ENCODE measurements at regions of chr21 and their contacts with region 1.

Region 1: DNA sequence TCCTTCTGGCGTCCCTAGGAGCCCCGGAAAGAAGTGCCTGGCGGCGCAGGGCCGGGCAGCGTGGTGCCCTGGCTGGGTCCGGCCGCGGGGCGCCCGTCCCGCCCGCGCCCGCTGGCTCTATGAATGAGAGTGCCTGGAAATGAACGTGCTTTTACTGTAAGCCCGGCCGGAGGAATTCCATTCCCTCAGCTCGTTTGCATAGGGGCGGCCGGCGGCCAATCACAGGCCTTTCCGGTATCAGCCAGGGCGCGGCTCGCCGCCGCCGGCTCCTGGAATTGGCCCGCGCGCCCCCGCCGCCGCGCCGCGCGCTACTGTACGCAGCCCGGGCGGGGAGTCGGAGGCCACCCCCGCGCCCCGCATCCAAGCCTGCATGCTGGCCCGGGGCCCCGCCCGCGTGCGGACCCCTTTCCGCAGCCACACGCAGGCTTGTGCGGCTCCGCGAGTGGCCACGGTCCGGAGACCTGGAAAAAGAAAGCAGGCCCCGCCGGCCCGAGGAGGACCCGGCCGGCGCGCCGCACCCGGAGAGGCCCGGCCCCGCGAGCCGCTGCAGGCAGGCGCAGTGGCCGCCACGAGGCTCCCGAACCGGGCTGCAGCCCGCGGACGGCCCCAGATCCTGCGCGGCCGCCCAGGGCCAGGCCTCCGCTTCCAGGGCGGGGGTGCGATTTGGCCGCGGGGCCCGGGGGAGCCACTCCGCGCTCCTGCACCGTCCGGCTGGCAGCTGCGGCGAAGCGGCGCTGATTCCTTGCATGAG is 160.4 kb downstream of the RUNX1 start:
- DNase-seq: peak; percentile 82
- ATAC-seq: peak; percentile 45
- H3K4me3 Mint-ChIP-seq: peak overlapping the region; percentile 91
- H3K27ac Mint-ChIP-seq: peak overlapping the region; percentile 99
- H3K4me1 Mint-ChIP-seq: peaks cover 53% of the 10 kb centered on the region
- H3K27me3 Mint-ChIP-seq: peaks cover 1% of the 10 kb centered on the region
- CTCF ChIP-seq: no peak

Region 2: GRCh38 chr21:34845521-34846451 is 43.0 kb before region 1 on chr21:
- CTCF ChIA-PET with region 1: interaction called, 4 read pairs
- POLR2A ChIA-PET with region 1: interaction called, 24 read pairs
- intact Hi-C with region 1: loop called (anchors 2 kb)
- DNase-seq: no peak
- ATAC-seq: peak; percentile 74
- H3K4me3 Mint-ChIP-seq: peak overlapping the region; percentile 52
- H3K27ac Mint-ChIP-seq: peak overlapping the region; percentile 64
- H3K4me1 Mint-ChIP-seq: peaks cover 36% of the 10 kb centered on the region
- H3K27me3 Mint-ChIP-seq: no peaks in the 10 kb centered on the region
- CTCF ChIP-seq: no peak

Region 3: DNA sequence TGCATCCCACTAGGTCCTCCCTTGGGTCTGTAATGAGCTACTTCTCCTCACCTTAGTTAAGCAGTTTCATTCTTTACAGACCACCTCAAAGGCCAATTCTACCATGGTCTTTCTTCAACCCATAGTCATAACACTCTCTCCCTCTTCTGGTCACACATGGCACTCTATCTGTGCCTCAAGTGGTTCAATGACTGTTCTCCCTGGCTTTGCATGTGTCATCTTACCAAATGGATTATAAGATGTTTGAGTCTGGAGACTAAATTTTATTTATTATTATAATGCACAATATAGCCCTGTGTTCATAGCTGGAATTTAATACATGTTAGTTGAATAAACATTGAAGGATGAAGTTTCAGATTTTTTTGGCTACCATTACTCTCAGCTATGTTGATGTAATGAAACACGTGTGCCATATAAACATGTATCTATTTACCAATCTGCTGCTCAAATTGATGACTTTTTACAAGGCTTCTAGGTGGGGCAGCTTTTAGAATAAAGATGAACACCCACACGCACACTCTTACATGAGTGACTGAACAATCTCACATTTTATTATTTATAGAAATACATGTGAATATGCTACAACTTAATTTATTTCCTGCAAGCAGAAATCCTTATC is 58.3 kb after region 1 on chr21:
- CTCF ChIA-PET with region 1: interaction called, 4 read pairs
- POLR2A ChIA-PET with region 1: interaction called, 12 read pairs
- intact Hi-C with region 1: loop called (anchors 2 kb)
- DNase-seq: no peak
- ATAC-seq: peak; percentile 36
- H3K4me3 Mint-ChIP-seq: no peak overlapping the region
- H3K27ac Mint-ChIP-seq: peak overlapping the region; percentile 51
- H3K4me1 Mint-ChIP-seq: peaks cover 53% of the 10 kb centered on the region
- H3K27me3 Mint-ChIP-seq: no peaks in the 10 kb centered on the region
- CTCF ChIP-seq: no peak

Region 4: DNA sequence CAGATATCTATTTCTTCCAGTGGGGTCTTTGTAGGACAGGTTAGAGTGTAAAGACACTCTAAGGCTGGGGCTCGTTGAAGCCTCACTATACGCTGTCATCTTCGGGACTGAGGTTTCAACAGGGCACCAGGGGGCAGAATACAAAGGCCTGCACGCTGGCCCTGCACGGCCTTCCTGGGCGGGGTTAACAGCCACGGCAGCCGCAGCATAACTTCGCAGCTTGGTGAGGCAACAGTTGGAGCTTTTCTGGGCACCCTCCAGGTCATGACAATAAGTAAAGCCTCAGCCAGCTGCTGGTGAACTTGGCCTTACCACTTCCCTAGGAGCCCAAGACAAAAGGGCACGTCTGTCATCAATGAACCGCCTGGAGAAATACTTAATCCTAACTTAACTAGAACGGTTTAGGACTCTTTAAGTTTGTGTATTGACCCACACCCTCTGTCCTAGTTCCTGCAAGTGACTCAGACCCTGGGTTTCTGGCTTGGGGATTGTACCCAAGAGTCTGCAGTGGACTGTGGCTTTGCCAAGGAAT is 162.6 kb after region 1 on chr21:
- CTCF ChIA-PET with region 1: interaction called, 39 read pairs
- POLR2A ChIA-PET with region 1: interaction called, 290 read pairs
- intact Hi-C with region 1: loop called (anchors 1 kb)
- DNase-seq: peak; percentile 54
- ATAC-seq: peak; percentile 45
- H3K4me3 Mint-ChIP-seq: peak overlapping the region; percentile 68
- H3K27ac Mint-ChIP-seq: peak overlapping the region; percentile 97
- H3K4me1 Mint-ChIP-seq: peaks cover 60% of the 10 kb centered on the region
- H3K27me3 Mint-ChIP-seq: no peaks in the 10 kb centered on the region
- CTCF ChIP-seq: no peak

Region 5: GRCh38 chr21:35400233-35400957 is 511.7 kb after region 1 on chr21:
- CTCF ChIA-PET with region 1: interaction called, 66 read pairs
- POLR2A ChIA-PET with region 1: interaction called, 63 read pairs
- intact Hi-C with region 1: loop called (anchors 1 kb)
- DNase-seq: peak; percentile 18
- ATAC-seq: peak; percentile 93
- H3K4me3 Mint-ChIP-seq: peak overlapping the region; percentile 0
- H3K27ac Mint-ChIP-seq: no peak overlapping the region
- H3K4me1 Mint-ChIP-seq: peaks cover 13% of the 10 kb centered on the region
- H3K27me3 Mint-ChIP-seq: peaks cover 8% of the 10 kb centered on the region
- CTCF ChIP-seq: no peak

Region 6: GRCh38 chr21:36028127-36029069 is 1139.7 kb after region 1 on chr21:
- CTCF ChIA-PET with region 1: no interaction called
- POLR2A ChIA-PET with region 1: no interaction called
- intact Hi-C with region 1: loop called (anchors 2 kb)
- DNase-seq: peak; percentile 49
- ATAC-seq: peak; percentile 90
- H3K4me3 Mint-ChIP-seq: no peak overlapping the region
- H3K27ac Mint-ChIP-seq: no peak overlapping the region
- H3K4me1 Mint-ChIP-seq: peaks cover 5% of the 10 kb centered on the region
- H3K27me3 Mint-ChIP-seq: no peaks in the 10 kb centered on the region
- CTCF ChIP-seq: peak; percentile 85